Adrenal gland (tissue), 19 donors: ENCODE measurements at regions of chr20 and their contacts with region 1.

Region 1: DNA sequence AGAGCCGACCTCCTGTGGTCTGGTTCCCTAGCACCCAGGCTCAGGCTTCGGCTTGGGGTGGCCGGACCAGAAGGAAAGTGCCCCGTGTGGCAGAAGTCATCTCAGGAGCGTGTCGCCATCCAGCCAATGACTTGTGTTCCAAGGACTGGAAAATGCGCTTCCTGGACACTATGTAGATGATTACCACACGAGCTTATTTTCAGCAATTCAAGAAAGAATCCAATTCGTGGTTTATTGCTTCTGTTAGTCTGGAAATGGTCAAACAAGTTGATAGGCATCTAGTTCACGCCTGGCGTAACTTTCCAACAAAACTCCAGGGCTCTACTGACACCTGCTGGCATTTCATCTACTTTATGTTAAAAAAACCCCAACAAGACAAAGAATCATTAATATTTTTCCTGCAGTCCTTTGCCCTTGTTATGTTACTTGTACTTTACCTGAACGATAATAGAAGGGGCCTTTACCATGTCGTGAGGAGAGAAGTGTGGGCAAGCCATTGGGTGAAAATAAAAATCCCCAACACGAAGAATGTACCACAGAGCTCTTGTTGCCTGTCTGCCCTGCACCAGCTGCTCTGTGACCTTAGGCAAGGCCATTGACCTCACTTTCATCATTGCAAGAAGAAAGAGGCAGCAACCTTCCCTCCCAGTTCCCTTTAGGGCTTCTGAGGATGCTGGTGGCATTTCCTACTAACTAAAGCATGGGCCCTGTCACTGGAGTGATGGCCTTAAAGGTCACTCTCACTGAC is 154.7 kb upstream of the LAMP5 start:
- DNase-seq: peak; percentile 17 to 77 (median 29)
- H3K4me3 ChIP-seq: no peak overlapping the region
- H3K27ac ChIP-seq: no peak overlapping the region
- H3K4me1 ChIP-seq: no peaks in the 10 kb centered on the region
- H3K27me3 ChIP-seq: no peaks in the 10 kb centered on the region
- CTCF ChIP-seq: peak; percentile 17 to 66 (median 53)
- POLR2A ChIP-seq: no peak

Region 2: GRCh38 chr20:8782804-8783203 is 576.9 kb before region 1 on chr20:
- intact Hi-C with region 1: loop called in 1 of 2 experiments (anchors 10 kb)
- DNase-seq: no peak
- H3K4me3 ChIP-seq: no peak overlapping the region
- H3K27ac ChIP-seq: no peak overlapping the region
- H3K4me1 ChIP-seq: no peaks in the 10 kb centered on the region
- H3K27me3 ChIP-seq: no peaks in the 10 kb centered on the region
- CTCF ChIP-seq: no peak
- POLR2A ChIP-seq: no peak

Region 3: GRCh38 chr20:8842525-8842924 is 517.2 kb before region 1 on chr20:
- intact Hi-C with region 1: loop called in 1 of 2 experiments (anchors 10 kb)
- DNase-seq: no peak
- H3K4me3 ChIP-seq: no peak overlapping the region
- H3K27ac ChIP-seq: no peak overlapping the region
- H3K4me1 ChIP-seq: no peaks in the 10 kb centered on the region
- H3K27me3 ChIP-seq: no peaks in the 10 kb centered on the region
- CTCF ChIP-seq: no peak
- POLR2A ChIP-seq: no peak

Region 4: DNA sequence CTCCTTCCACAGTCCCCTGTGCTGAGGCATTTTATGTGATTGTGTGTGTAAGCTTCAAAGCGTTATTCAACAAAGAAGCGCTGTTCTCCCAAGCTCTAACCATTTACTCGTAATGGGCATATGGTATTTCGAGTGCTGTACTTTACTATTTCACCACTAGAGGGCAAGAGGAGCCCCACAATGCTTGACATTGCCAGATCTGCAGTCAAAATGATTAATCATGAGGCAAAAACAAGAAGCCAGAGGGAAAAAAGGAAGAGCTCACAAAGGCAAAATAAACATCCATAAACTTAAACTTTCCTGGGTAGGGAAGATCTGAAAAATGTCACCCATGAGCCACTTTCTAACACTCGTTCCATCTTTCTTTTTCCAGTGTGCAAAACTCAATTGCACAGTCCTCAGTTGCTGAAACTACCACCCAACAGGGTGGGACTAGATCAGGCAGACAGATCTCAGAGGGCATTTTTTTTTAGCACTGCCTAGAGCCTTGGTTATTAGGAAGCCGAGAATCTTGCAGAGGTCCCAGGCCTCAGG is 505.9 kb before region 1 on chr20:
- intact Hi-C with region 1: loop called (anchors 5 to 10 kb)
- DNase-seq: peak in 5 of 7 donors; percentile 9 to 59 (median 28)
- H3K4me3 ChIP-seq: no peak overlapping the region
- H3K27ac ChIP-seq: peak overlapping the region in 2 of 5 donors; percentile 11 to 62
- H3K4me1 ChIP-seq: peaks cover 0 to 20% of the 10 kb centered on the region in 2 donors
- H3K27me3 ChIP-seq: no peaks in the 10 kb centered on the region
- CTCF ChIP-seq: peak; percentile 79 to 90 (median 86)
- POLR2A ChIP-seq: no peak

Region 5: DNA sequence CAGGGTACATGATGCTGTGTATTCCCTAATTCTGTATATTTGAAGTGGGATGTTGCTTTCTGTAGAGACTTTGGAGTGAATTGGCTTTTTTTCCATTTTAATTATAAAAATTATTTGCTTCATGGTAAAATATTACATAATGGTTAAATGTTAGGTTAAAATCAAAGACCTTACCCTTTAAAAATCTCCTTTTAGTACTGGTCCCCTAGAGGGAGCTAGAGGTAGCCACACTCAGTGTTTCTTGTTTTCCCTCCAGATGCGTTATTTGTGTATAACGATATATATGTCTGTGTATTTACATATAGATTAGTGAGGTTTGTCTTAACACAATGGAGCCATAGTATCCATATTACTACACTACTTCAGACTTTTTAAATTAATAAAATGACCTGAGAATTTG is 144.2 kb before region 1 on chr20:
- intact Hi-C with region 1: no loop called
- DNase-seq: no peak
- H3K4me3 ChIP-seq: no peak overlapping the region
- H3K27ac ChIP-seq: no peak overlapping the region
- H3K4me1 ChIP-seq: peaks cover 0 to 13% of the 10 kb centered on the region in 2 donors
- H3K27me3 ChIP-seq: no peaks in the 10 kb centered on the region
- CTCF ChIP-seq: peak in 4 of 6 experiments; percentile 12 to 40 (median 15)
- POLR2A ChIP-seq: no peak